Mucosa of descending colon (tissue), 3 donors: ENCODE measurements at regions of chr6 and their contacts with region 1.

Region 1: DNA sequence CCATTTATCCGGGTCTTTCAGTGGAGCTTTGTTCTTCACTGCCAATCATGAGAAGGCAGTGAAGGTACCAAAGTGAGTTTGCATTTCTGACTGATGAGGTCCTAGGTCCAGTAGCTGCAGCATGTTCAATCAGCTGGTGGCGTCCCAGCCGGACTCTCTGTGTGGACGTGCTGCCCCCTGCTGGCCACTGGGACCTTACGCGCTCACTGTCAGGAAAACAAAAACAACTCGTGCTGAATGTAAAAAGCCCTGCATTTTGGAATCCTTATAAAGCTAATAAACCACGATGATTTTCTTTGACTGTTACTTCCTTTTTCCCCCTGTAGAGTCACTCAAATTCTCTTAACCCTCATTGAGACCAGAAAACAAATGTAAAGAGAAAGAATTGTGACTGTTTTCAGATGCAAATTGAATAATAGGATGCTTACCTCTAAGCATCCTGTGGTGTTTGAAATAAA is 4.9 kb upstream of the CD24 start:
- DNase-seq: peak; percentile 88 to 93 (median 92)
- ATAC-seq: peak; percentile 63
- H3K4me3 ChIP-seq: no peak overlapping the region
- H3K4me1 ChIP-seq: peaks cover 11% of the 10 kb centered on the region
- CTCF ChIP-seq: peak; percentile 84

Region 2: DNA sequence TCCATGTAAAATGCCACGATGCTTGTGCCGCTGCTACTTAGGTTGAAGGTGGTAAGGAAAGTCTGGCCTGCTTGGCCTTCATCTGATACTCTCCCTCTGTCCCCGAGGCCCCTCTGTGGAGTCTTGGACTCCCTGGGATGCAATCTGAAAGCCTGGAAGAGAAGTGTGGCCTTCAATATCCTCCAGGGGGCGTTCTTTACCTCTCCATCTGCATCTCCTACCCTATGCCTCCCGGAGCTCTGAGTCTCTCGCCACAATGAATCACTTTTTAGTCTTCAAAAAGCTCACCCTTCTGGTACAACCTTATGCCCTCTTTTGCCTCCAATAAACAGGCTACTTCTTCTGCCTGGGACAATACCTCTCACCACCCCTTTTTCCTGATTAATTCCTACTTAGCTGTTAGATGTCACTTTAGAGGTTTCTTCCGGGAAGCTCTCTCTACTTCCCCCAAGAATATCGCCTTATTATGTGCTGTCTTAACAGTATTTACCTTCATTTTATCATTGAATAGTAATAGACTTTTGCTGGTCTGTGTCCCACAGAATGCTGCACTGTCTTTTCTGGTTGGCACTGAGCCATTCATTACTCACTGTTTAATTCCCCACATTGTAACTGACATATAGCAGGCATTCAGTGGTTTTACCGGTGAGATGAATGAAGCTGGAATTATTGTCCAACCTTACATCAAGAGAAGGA is 640.0 kb before region 1 on chr6:
- intact Hi-C with region 1: loop called in 1 of 2 experiments (anchors 10 kb)
- DNase-seq: peak in 1 of 3 donors; percentile 76
- ATAC-seq: peak; percentile 95
- H3K4me3 ChIP-seq: no peak overlapping the region
- H3K4me1 ChIP-seq: peaks cover 2% of the 10 kb centered on the region
- CTCF ChIP-seq: peak; percentile 66

Region 3: GRCh38 chr6:106608062-106608668 is 371.3 kb before region 1 on chr6:
- intact Hi-C with region 1: loop called in 1 of 2 experiments (anchors 5 kb)
- DNase-seq: peak in 1 of 3 donors; percentile 77
- ATAC-seq: peak; percentile 93
- H3K4me3 ChIP-seq: no peak overlapping the region
- H3K4me1 ChIP-seq: no peaks in the 10 kb centered on the region
- CTCF ChIP-seq: no peak

Region 4: GRCh38 chr6:106883808-106884262 is 95.6 kb before region 1 on chr6:
- intact Hi-C with region 1: no loop called
- DNase-seq: no peak
- ATAC-seq: peak; percentile 17
- H3K4me3 ChIP-seq: no peak overlapping the region
- H3K4me1 ChIP-seq: no peaks in the 10 kb centered on the region
- CTCF ChIP-seq: no peak